ENCODE measurements at regions of chr13 and their contacts with region 1.

Region 1: DNA sequence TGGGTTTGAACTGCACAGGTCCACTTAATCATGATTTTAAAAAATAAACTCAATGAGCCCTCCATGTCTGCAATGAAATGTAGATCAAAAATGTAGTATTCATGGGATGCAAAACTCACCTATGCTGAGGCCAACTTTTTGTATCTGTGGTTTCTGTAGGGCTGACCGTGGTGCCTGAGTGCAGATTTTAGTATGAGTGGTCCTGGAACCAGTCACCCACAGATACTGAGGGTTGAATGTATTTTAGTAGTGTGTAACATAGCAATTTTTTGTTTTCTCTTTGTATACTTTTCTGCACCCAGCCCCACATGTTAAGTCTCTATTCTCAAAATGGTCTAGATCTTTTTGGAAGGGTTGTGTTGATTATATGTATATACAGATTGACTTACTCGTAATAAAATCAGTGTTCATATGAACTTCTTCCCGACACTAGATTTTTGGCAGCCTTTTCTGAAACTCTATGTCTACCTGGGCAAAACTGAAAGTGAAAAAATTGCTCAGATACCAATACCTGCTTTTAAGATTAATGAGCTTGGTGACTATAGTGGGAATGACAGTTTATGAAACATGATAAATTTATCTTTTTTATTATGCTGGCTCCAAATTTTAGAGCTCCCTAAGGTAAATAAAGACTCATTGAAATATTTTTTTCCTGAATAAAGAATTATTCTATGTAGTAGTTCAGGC is 51.6 kb downstream of the DNAJC15 start:
- DNase-seq: peak in 1 of 9 experiments; percentile 20
- ATAC-seq: no peak
- H3K4me3 ChIP-seq: no peak overlapping the region
- H3K4me3 Mint-ChIP-seq: peak overlapping the region; percentile 55
- H3K27ac ChIP-seq: no peak overlapping the region
- H3K27ac Mint-ChIP-seq: peak overlapping the region; percentile 1
- H3K4me1 ChIP-seq: no peaks in the 10 kb centered on the region
- H3K4me1 Mint-ChIP-seq: peaks cover 42% of the 10 kb centered on the region
- H3K27me3 ChIP-seq: no peaks in the 10 kb centered on the region
- H3K27me3 Mint-ChIP-seq: no peaks in the 10 kb centered on the region
- CTCF ChIP-seq: no peak

Region 2: DNA sequence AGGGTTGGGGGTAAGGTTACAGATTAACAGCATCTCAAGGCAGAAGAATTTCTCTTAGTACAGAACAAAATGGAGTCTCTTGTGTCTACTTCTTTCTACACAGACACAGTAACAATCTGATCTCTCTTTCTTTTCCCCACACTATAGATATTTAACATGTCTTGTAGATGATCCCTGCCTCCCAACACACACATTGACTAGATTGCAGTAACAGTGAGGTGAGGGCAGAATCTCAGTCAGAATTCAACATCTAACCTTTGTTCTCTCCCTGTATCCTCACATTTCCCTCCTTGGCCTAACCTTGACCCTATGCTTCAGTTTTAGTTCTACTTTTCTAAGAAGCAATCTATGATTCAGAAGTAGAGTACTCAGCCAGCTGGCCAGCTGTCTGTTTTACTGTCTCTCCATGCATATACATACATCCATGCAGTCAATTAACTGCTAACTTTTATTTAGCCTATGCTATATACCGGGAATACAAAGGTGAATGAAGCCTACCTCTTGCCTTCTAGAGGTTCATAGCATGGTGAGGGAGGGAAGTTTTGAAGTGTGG is 33.5 kb before region 1 on chr13:
- CTCF ChIA-PET with region 1: no interaction called
- POLR2A ChIA-PET with region 1: no interaction called
- intact Hi-C with region 1: loop called in 1 of 2 experiments (anchors 5 kb)
- DNase-seq: no peak
- ATAC-seq: no peak
- H3K4me3 ChIP-seq: no peak overlapping the region
- H3K4me3 Mint-ChIP-seq: no peak overlapping the region
- H3K27ac ChIP-seq: no peak overlapping the region
- H3K27ac Mint-ChIP-seq: no peak overlapping the region
- H3K4me1 ChIP-seq: peaks cover 16% of the 10 kb centered on the region
- H3K4me1 Mint-ChIP-seq: peaks cover 58% of the 10 kb centered on the region
- H3K27me3 ChIP-seq: no peaks in the 10 kb centered on the region
- H3K27me3 Mint-ChIP-seq: no peaks in the 10 kb centered on the region
- CTCF ChIP-seq: no peak

Region 3: DNA sequence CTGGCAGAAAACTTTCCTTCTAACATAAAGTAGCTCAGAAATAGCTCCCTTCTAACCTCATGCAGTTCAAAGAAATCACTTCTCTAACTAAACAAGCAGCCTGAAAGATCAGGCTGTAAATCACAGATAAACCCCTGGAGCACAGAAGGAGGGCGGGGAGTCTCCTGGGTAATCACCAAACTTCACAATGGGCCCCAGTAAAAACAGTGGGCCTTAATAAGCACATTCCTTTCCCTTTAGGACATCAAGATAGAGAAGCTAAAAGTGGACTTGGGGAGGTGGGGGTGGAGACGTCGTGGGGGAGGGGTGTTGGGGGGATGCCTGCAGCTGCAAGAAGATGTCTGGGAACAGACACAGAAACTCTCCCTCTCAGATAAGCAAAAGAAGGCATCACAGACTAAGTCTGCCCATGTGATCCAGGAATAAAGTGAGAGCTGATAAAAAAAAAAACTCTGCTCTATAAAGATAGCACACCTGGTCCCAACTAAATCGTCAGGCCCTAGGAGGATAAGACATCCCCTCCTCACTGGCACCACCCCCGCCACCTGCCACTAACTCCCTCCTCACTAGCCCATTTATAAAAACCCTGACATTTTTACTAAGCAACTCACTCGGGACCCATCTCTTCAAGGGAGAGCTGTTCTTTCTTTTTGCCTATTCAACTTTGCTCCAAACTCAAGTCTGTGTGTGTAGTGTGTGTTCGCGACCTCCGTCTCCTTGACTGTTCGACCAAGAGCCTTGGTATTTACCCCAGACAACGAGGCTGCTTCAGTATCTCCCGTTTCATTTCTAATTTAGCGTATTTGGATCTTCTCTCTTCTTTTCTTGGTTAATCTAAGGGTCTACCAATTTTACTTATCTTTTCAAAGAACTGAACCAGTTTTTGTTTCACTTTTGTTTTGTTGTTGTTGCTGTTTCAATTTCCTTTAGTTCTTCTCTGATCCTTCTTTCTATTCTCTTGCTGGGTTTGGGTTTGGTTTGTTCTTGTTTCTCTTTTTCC is 19.9 kb before region 1 on chr13:
- CTCF ChIA-PET with region 1: no interaction called
- POLR2A ChIA-PET with region 1: no interaction called
- intact Hi-C with region 1: loop called in 1 of 2 experiments (anchors 2 kb)
- DNase-seq: peak in 5 of 9 experiments; percentile 17 to 60 (median 40)
- ATAC-seq: peak; percentile 35
- H3K4me3 ChIP-seq: peak overlapping the region; percentile 55 to 71
- H3K4me3 Mint-ChIP-seq: no peak overlapping the region
- H3K27ac ChIP-seq: peak overlapping the region; percentile 75 to 88
- H3K27ac Mint-ChIP-seq: no peak overlapping the region
- H3K4me1 ChIP-seq: peaks cover 38% of the 10 kb centered on the region
- H3K4me1 Mint-ChIP-seq: peaks cover 34% of the 10 kb centered on the region
- H3K27me3 ChIP-seq: no peaks in the 10 kb centered on the region
- H3K27me3 Mint-ChIP-seq: no peaks in the 10 kb centered on the region
- CTCF ChIP-seq: no peak

Region 4: DNA sequence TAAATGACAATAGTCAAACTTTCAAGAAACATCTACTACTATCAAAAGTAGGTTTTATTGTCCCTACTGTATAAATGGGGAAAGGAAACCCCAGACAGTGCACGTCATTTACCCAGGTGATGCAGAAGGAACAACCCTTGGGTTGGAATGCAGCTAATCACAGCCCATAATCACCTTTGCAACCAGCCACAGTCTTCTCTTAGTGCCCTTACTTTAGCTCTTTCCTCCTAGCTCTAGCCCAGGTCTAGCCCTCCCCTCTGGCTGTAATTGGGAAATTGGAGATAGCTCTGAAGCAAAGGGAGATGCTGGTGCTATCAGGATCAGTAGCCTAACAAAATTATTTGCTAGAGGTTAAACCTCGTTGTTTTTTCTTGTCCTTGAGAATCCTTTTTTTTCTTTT is 1526.6 kb after region 1 on chr13:
- CTCF ChIA-PET with region 1: no interaction called
- POLR2A ChIA-PET with region 1: no interaction called
- intact Hi-C with region 1: no loop called
- DNase-seq: no peak
- ATAC-seq: no peak
- H3K4me3 ChIP-seq: no peak overlapping the region
- H3K4me3 Mint-ChIP-seq: no peak overlapping the region
- H3K27ac ChIP-seq: no peak overlapping the region
- H3K27ac Mint-ChIP-seq: no peak overlapping the region
- H3K4me1 ChIP-seq: no peaks in the 10 kb centered on the region
- H3K4me1 Mint-ChIP-seq: no peaks in the 10 kb centered on the region
- H3K27me3 ChIP-seq: peaks cover 0 to 5% of the 10 kb centered on the region in 2 experiments
- H3K27me3 Mint-ChIP-seq: peaks cover 8% of the 10 kb centered on the region
- CTCF ChIP-seq: no peak